A673 (cell line): ENCODE measurements at regions of chr12 and their contacts with region 1.

Region 1: DNA sequence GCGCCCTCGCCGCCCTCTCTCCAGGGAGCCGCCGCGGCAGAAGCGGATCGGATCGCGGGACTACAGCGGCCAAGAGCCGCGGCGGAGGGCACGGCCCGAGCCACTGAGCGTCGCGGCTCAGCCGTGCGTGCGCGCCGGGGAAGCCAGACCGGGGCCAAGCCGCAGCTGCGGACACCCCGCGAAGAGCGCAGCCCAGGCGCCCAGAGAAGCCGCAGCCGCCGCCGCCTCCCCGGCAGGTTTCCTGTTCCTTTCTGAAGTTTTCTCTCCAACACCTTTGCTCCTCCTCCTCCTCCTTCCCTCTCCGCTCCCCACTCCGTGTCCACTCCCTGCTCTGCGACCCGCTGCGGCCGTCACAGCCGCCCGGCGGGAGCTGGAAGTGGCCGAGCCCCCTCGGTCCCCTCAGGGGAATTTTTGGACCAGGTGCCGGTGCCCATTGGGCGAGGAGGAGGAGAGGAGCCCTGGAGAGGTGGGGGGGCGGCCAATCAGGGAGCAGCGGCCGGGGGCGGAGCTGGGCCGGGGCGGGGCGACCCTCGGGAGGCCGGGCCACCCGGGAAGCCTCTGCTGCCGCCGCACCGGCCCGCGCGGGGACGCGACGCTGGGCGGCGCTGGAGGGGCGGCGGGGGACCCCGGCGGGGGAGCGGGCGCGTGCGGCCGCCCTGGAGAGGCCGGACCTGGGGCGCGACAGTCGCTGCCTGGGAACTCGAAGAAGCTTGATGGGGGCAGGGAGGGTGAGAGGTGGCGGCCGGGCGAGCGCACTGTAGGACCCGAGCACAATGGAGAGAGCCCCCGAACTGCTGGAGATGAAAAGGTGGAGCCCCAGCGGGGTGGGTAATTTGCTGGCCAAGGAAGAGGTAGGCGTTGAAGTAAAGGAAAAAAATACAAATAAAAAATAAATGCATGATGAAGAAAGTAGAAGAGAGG is at the start of gene ITPR2:
- DNase-seq: peak; percentile 94
- H3K4me3 ChIP-seq: peak within 1 kb of the TSS; percentile 98
- H3K27ac ChIP-seq: peak within 1 kb of the TSS; percentile 73
- H3K4me1 ChIP-seq: peaks cover 8% of the 10 kb centered on the region
- H3K27me3 ChIP-seq: no peaks in the 10 kb centered on the region
- CTCF ChIP-seq: no peak; the same call in 1 of the 2 replicates
- total RNA-seq, gene ITPR2: 22.6 and 27.3 TPM in 2 replicates

Region 2: DNA sequence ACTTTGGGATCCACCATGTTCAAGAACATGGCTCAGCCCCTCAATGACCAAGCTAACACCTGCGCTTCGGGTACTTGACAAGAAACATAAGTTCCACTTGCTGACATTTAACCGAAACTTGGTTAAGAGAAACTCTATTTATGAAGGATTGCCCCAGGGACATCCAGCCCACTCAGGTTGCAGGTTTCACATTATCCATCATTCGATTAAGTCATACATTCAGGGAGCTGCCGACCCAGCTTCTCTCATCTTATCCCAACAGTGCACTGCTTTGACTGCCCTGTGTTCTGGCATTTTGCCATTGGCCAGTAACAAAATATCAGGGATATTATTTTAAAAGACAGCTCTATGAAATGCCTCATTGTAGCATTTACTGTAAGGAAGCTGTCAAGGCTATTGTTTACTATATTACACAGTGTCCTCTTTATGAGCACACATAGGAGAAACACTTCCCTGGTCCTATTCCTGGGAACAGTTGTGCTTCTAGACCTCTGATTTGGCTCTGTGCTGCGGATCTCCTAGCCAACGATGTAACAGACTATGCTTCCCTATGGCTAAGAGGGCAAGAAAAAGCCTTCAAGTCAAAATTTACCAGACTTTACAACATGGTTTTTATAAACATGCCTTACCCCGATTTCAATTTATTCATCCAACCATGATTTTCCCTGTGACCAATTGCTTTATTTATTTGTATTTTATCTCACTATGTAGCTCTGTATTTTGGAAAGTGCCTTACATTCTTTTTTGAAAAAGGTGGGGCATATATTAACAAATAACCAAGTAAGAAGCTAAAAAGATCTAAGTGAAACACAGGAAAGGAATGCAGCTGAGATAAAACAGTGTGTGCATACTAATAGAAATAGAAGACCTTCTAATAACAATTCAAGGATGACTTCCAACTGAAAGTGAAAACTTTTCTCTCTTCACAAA is 109.4 kb before region 1 on chr12:
- CTCF ChIA-PET with region 1: no interaction called
- POLR2A ChIA-PET with region 1: no interaction called
- intact Hi-C with region 1: loop called (anchors 5 kb)
- DNase-seq: no peak
- H3K4me3 ChIP-seq: no peak overlapping the region
- H3K27ac ChIP-seq: no peak overlapping the region
- H3K4me1 ChIP-seq: peaks cover 28% of the 10 kb centered on the region
- H3K27me3 ChIP-seq: no peaks in the 10 kb centered on the region
- CTCF ChIP-seq: no peak